Dendritic cell treated with granulocyte-macrophage colony-stimulating factor and Interleukin-4, amounts not matched to agents 40 ng/mL and 50 ng/mL, for 4 days (primary cell): ENCODE measurements at regions of chr9 and their contacts with region 1.

Region 1: DNA sequence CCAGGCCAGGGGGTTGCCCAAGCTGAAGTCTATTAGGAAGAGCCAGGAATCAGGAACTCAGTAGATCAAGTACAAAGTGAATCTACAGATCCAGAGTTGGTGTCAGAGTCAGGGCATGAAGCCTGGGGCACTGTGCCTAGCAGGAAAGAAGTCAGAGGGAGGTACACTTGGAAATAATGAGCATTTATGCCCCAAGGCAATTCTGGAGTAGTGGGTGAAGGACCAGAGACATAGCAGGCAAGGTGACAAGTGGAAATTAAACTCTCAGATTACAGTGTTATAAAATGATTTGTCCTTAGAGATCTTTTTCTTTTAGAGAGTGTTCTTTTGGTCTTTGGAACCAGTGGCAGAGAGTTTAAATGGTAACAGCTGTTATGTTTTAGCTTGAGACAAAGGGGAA is 138.0 kb downstream of the ADAMTSL1 start:
- H3K4me3 Mint-ChIP-seq: no peak overlapping the region
- H3K27ac Mint-ChIP-seq: no peak overlapping the region
- H3K4me1 Mint-ChIP-seq: no peaks in the 10 kb centered on the region
- H3K27me3 Mint-ChIP-seq: no peaks in the 10 kb centered on the region

Region 2: GRCh38 chr9:18588002-18588401 is 24.0 kb before region 1 on chr9:
- intact Hi-C with region 1: loop called (anchors 2 kb)
- H3K4me3 Mint-ChIP-seq: no peak overlapping the region
- H3K27ac Mint-ChIP-seq: no peak overlapping the region
- H3K4me1 Mint-ChIP-seq: no peaks in the 10 kb centered on the region
- H3K27me3 Mint-ChIP-seq: no peaks in the 10 kb centered on the region